Activated CD4-positive, alpha-beta T cell treated with anti-CD3 and anti-CD28 coated beads, Interleukin-2, amount 10 ng/mL, durations not matched to agents 24 days and 14 days (primary cell): ENCODE measurements at regions of chr11 and their contacts with region 1.

Region 1: DNA sequence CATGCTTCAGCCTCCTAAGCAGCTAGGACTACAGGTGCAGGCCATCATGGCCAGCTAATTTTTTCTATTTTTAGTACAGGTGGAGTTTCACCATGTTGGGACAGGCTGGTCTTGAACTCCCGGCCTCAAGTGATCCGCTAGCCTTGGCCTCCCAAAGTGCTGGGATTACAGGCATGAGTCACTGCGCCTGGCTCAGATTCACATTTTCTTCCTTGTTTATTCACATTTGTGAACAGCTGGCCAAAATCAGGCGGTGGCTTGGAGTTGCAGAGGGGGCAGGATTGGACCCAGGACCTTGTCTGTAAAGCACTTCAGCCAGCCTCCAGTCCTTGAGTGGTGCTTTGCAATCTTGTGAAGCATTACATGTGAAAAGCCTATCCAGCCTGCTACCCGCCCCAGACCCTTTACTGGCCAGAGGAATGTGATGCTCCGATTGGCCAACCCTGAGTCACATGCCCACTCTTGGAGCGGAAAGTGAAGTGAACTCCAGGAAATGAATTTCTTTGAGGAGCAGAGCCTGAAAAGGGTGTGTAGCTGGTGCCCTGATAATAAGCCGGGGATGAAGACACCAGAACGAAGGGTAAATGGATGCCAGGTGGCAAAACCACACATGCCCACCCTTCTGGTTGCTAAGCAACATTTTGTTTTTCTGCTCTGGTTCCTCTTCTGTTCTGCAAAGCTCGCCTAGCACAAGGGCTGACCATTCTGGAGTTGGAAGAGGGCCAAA is 62.6 kb upstream of the PTPRJ start:
- DNase-seq: no peak
- H3K4me3 Mint-ChIP-seq: no peak overlapping the region
- H3K27ac Mint-ChIP-seq: peak overlapping the region; percentile 58
- H3K4me1 Mint-ChIP-seq: peaks cover 43% of the 10 kb centered on the region
- H3K27me3 Mint-ChIP-seq: no peaks in the 10 kb centered on the region

Region 2: DNA sequence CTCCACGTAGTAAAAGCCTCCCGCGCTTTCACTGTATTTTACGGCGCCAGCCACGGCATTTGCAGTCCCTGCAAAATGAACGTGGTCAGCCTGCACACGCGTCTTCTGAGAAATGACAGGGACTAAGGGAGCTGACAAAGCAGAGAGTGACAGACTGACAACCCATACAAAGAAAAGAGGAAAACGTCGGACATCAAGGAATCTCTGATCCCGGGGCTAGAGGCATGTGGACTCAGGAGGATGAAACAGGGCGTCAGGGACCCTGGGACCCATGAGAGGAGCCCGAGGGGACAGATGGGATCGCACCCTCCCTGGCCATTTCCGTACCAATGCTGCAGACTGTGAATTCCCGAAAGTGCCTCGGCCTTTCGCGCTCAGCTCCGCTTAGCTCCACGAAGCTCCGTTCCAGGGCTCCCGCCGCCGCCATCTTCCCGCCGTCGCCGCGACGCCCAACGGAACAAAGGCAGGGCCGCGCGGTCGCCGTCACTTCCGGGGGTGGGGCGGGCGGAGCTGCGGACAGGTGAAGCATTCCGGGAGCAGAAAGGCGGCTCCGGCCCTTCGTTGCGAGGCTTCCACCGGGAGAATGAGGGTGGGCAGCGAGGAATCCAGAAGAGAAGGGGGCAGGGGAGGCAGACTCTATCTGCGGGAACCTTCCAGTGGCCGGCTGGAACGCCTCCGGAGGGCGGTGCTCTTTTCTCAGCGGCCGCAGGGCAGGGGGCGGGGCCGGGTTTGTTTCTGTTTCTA is 69.7 kb before region 1 on chr11 and contains the start of gene NUP160:
- intact Hi-C with region 1: no loop called
- DNase-seq: peak; percentile 98
- H3K4me3 Mint-ChIP-seq: peak within 1 kb of the TSS; percentile 99
- H3K27ac Mint-ChIP-seq: peak within 1 kb of the TSS; percentile 99
- H3K4me1 Mint-ChIP-seq: peaks cover 38% of the 10 kb centered on the region
- H3K27me3 Mint-ChIP-seq: no peaks in the 10 kb centered on the region
- total RNA-seq, gene NUP160: 102 and 104 TPM in 2 replicates

Region 3: GRCh38 chr11:47863189-47863892 is 54.5 kb before region 1 on chr11:
- intact Hi-C with region 1: loop called (anchors 5 kb)
- DNase-seq: peak; percentile 70
- H3K4me3 Mint-ChIP-seq: peak overlapping the region; percentile 13
- H3K27ac Mint-ChIP-seq: peak overlapping the region; percentile 14
- H3K4me1 Mint-ChIP-seq: peaks cover 26% of the 10 kb centered on the region
- H3K27me3 Mint-ChIP-seq: no peaks in the 10 kb centered on the region